ENCODE measurements at regions of chr4 and their contacts with region 1.

Region 1: DNA sequence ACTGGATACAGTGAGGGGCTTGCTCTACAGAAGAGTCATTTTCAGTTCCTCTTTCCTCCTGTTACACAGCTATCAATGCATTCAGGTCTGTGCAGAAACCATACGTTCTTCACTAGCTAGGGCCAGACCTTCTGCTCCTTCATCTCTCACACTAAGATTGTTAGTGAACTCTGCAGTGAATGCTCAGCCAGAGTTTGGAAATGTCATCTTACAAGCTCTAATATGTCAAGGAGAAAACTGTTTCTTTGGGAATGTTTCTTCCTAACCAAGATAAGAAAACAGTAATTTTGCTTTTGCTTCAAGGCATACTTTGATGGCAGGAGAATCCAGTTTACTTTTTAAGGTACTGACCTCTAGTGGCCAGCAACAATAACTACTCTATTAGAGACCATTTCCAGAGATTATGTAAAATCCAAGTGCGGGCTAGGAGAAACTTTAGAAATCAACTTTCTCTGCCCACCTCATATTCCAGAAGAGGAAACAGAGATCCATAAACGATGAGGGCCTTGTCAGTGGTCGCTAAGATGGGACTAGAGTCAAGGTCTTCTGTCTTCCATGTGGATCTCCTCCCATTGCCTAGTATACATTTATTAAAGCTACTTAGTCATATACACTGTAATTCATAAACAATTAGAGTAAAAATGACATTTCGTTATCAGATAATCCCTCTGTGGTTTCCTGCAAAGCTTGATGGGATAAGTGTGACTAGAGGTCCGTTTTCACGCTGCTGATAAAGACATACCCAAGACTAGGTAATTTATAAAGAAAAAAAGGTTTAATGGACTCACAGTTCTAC is 12.1 kb upstream of the CC2D2A start:
- DNase-seq: no peak
- H3K4me3 ChIP-seq: no peak overlapping the region
- CTCF ChIP-seq: peak; percentile 48

Region 2: GRCh38 chr4:15231265-15232091 is 226.1 kb before region 1 on chr4:
- CTCF ChIA-PET with region 1: interaction called, 358 read pairs
- POLR2A ChIA-PET with region 1: no interaction called
- DNase-seq: no peak
- H3K4me3 ChIP-seq: no peak overlapping the region
- CTCF ChIP-seq: peak; percentile 69

Region 3: GRCh38 chr4:15244354-15244753 is 213.2 kb before region 1 on chr4:
- CTCF ChIA-PET with region 1: interaction called, 358 read pairs
- POLR2A ChIA-PET with region 1: no interaction called
- DNase-seq: no peak
- H3K4me3 ChIP-seq: no peak overlapping the region
- CTCF ChIP-seq: no peak

Region 4: GRCh38 chr4:15253201-15253748 is 204.3 kb before region 1 on chr4:
- CTCF ChIA-PET with region 1: interaction called, 12 read pairs
- POLR2A ChIA-PET with region 1: no interaction called
- DNase-seq: no peak
- H3K4me3 ChIP-seq: no peak overlapping the region
- CTCF ChIP-seq: no peak

Region 5: GRCh38 chr4:15336410-15337172 is 121.0 kb before region 1 on chr4:
- CTCF ChIA-PET with region 1: interaction called, 12 read pairs
- POLR2A ChIA-PET with region 1: no interaction called
- DNase-seq: peak; percentile 58
- H3K4me3 ChIP-seq: no peak overlapping the region
- CTCF ChIP-seq: no peak

Region 6: GRCh38 chr4:15469402-15470127 is 12.0 kb after region 1 on chr4 and contains the start of gene CC2D2A:
- CTCF ChIA-PET with region 1: interaction called, 92 read pairs
- POLR2A ChIA-PET with region 1: no interaction called
- DNase-seq: no peak
- H3K4me3 ChIP-seq: peak within 1 kb of the TSS; percentile 55
- CTCF ChIP-seq: no peak

Measured in AG04449 (cell line).